Head of caudate nucleus (tissue), 42 donors: ENCODE measurements at regions of chr19 and their contacts with region 1.

Region 1: DNA sequence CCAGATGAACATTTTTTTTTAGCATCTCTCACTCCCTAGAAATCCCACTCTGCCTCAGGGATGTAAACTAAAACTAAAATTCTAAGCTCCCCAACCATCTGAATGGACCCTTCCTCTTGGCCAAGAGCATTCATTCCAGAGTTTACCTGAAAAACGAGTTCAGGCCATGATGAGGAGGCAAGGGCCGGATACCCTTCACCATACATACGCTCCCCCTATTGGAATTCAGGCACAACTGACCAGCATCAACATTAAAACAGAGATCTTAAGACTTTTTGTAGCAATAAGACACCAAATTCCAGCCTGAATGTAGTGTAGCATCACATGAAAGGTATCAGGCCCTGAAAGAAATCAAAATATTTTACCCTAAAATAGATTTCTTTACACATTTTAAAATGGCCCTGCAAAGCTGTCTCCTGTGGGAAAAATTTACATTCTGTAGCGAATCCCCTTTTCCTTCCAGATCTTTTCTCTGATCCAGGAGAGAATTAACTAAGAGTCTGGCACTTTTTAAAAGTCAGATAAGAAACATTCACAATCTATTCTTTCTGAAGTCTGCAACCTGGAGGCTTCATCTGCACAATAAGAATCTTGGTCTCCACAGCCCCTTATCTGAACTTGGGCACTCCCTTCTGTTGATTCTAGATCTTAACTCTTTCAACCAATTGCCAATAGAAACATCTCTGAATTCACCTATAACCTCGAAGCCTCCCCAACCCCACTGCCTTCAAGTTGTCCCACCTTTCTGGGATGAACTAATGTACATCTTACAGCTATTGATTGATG is 888.5 kb downstream of the UQCRFS1 start:
- DNase-seq: no peak

Region 2: DNA sequence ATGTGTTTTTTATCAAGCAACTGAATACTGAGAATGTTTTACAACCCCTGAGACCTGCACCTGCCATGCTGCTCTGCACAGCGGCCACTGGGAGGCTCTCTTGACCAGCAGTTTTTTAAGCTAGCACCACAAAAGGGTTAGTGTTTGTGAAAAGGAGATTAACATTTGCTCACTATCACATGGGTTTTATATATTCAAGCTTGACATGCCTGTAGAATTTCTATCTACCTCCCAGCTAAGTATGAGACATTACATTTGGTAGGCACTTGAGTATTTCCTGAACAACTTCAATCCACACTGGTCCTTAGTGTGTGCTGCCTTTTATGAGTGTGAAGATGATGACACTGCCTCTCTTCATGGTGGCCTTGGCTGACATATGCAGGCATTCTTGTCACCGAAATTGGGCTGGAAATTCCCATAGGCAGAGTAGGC is 350.4 kb before region 1 on chr19:
- intact Hi-C with region 1: loop called (anchors 5 kb)
- DNase-seq: peak; percentile 28 to 82 (median 60)

Region 3: DNA sequence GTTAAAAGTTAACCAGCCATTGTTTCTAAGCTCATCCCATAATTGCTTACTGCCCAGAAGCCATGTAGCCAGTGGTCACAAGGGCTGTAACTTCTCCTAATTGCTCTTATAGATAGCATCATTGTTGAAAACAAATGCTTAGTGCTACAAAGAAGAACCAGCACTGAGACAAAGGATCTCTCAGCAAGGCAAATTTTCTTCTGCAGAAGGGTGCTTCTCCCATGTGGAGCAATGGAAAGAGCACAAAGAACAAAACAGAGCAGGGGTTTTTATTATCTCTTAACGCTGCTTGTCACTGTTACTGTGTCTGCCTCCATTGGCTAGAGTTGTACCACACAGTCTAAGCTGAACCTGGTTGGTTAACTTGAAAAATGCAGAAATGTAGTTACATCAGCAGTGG is 148.3 kb before region 1 on chr19:
- intact Hi-C with region 1: no loop called
- DNase-seq: no peak

Region 4: GRCh38 chr19:28242297-28242927 is 82.1 kb before region 1 on chr19:
- intact Hi-C with region 1: loop called (anchors 10 kb)
- DNase-seq: peak in 29 of 42 donors; percentile 11 to 80 (median 35)

Region 5: GRCh38 chr19:28289295-28290063 is 35.0 kb before region 1 on chr19:
- intact Hi-C with region 1: no loop called
- DNase-seq: peak; percentile 8 to 83 (median 62)